PC-3 (cell line): ENCODE measurements at regions of chr7 and their contacts with region 1.

Region 1: DNA sequence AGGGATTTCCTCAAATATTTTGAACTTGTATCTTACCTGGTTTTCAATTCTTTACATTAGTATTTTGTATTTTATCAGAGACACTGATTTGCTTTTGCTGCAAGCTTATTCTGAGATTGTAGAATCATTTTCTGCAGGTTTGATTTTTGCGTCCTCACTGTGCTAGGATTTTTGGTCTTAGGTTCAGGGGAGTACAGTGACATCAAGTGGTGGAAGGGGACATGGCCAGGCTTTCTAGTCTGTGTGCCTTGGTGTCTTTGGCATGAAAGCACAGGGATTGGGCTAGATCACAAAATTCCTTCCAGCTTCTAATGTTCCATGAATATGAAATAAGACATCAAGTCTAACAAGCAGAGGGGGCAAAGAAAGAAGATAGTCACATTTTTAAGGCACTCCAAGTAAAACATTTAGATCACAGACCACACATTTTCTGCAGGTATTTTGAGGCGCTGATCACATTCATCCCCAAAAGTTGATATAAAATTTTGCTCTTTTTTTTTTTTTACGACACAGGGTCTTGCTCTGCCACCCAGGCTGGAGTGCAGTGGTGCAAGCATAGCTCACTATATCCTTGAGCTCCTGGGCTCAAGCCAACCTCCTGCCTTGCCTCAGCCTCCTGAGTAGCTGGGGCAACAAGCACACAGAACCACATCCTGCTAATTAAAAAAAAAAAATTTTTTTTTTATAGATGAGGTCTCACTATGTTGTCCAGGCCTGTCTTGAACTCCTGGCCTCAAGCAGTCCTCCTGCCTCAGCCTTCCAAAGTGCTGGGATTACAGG is 124.4 kb downstream of the PON1 start:
- DNase-seq: peak; percentile 60
- ATAC-seq: peak; percentile 87
- H3K4me3 ChIP-seq: no peak overlapping the region
- H3K27ac ChIP-seq: no peak overlapping the region
- H3K4me1 ChIP-seq: no peaks in the 10 kb centered on the region
- H3K27me3 ChIP-seq: no peaks in the 10 kb centered on the region
- CTCF ChIP-seq: peak; percentile 81

Region 2: GRCh38 chr7:94449148-94449725 is 750.7 kb before region 1 on chr7:
- CTCF ChIA-PET with region 1: interaction called, 5 read pairs
- POLR2A ChIA-PET with region 1: no interaction called
- intact Hi-C with region 1: loop called (anchors 1 kb)
- DNase-seq: peak; percentile 58
- ATAC-seq: peak; percentile 48
- H3K4me3 ChIP-seq: no peak overlapping the region
- H3K27ac ChIP-seq: no peak overlapping the region
- H3K4me1 ChIP-seq: peaks cover 4% of the 10 kb centered on the region; the same call in 1 of the 2 replicates
- H3K27me3 ChIP-seq: no peaks in the 10 kb centered on the region
- CTCF ChIP-seq: peak; percentile 76

Region 3: DNA sequence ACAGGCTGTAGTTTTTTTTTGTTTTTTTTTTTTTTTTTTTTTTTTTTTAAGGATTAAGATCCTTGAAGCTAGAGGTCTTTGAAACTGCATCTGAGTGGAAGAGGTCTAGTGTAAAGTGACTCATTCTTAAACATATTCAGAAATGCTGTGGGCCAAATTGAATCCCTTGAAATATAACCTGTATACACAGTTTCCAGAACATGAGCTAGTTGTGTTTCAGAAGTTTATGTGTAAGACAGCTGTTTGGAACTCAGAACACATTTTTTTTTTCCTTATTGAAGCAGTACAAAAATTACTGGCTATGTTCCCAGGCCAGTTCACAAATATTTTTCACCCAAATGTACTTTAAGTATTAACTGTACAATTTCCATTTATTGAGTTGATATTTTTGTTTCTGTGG is 224.6 kb before region 1 on chr7:
- CTCF ChIA-PET with region 1: no interaction called
- POLR2A ChIA-PET with region 1: no interaction called
- intact Hi-C with region 1: loop called (anchors 5 kb)
- DNase-seq: peak; percentile 71
- ATAC-seq: peak; percentile 69
- H3K4me3 ChIP-seq: peak overlapping the region; percentile 6; the same call in 1 of the 2 replicates
- H3K27ac ChIP-seq: peak overlapping the region; percentile 27
- H3K4me1 ChIP-seq: peaks cover 53% of the 10 kb centered on the region
- H3K27me3 ChIP-seq: no peaks in the 10 kb centered on the region
- CTCF ChIP-seq: no peak

Region 4: GRCh38 chr7:95126053-95126709 is 73.8 kb before region 1 on chr7:
- CTCF ChIA-PET with region 1: no interaction called
- POLR2A ChIA-PET with region 1: no interaction called
- intact Hi-C with region 1: loop called (anchors 2 kb)
- DNase-seq: no peak
- ATAC-seq: no peak
- H3K4me3 ChIP-seq: no peak overlapping the region
- H3K27ac ChIP-seq: no peak overlapping the region
- H3K4me1 ChIP-seq: peaks cover 13% of the 10 kb centered on the region
- H3K27me3 ChIP-seq: no peaks in the 10 kb centered on the region
- CTCF ChIP-seq: no peak

Region 5: GRCh38 chr7:95263785-95264575 is 64.0 kb after region 1 on chr7:
- CTCF ChIA-PET with region 1: no interaction called
- POLR2A ChIA-PET with region 1: no interaction called
- intact Hi-C with region 1: no loop called
- DNase-seq: peak; percentile 79
- ATAC-seq: peak; percentile 74
- H3K4me3 ChIP-seq: peak overlapping the region; percentile 25; the same call in 1 of the 2 replicates
- H3K27ac ChIP-seq: peak overlapping the region; percentile 85
- H3K4me1 ChIP-seq: peaks cover 39% of the 10 kb centered on the region
- H3K27me3 ChIP-seq: no peaks in the 10 kb centered on the region
- CTCF ChIP-seq: no peak

Region 6: GRCh38 chr7:95303038-95303905 is 103.3 kb after region 1 on chr7:
- CTCF ChIA-PET with region 1: interaction called, 12 read pairs
- POLR2A ChIA-PET with region 1: no interaction called
- intact Hi-C with region 1: no loop called
- DNase-seq: peak; percentile 16
- ATAC-seq: peak; percentile 53; the same call in 1 of the 2 replicates
- H3K4me3 ChIP-seq: no peak overlapping the region
- H3K27ac ChIP-seq: no peak overlapping the region
- H3K4me1 ChIP-seq: 0 out of 2 replicates have a peak, but pooled peaks cover under 1% of the 10 kb centered on the region
- H3K27me3 ChIP-seq: no peaks in the 10 kb centered on the region
- CTCF ChIP-seq: no peak